Activated B cell treated with CpG ODN at 0.5 μM for 24 hours (primary cell): ENCODE measurements at regions of chr9 and their contacts with region 1.

Region 1: DNA sequence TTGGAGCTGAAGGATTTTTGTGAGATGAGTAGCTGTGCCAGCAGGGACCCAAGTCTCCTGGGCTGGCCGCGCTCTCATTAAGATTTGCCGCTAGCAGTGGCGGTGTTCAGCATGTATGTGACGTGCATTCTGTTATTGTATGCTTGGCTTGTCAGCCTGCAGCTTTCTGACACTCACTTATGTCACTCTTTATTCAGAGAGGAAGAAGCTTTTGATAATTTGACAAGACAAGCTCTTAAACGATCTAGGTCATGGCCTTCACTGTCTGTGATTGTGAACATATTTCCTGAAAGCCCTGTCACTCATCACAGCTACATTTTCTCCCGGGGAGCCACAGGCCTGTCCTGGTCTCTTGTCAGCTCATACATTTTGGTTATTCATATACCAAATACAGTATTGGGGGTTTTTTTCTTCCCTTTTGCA is 98.2 kb upstream of the GRHPR start:
- DNase-seq: peak; percentile 42
- ATAC-seq: peak; percentile 86
- H3K4me3 Mint-ChIP-seq: peak overlapping the region; percentile 59
- H3K27ac Mint-ChIP-seq: peak overlapping the region; percentile 99
- H3K4me1 Mint-ChIP-seq: peaks cover 69% of the 10 kb centered on the region
- H3K27me3 Mint-ChIP-seq: no peaks in the 10 kb centered on the region
- CTCF ChIP-seq: no peak

Region 2: DNA sequence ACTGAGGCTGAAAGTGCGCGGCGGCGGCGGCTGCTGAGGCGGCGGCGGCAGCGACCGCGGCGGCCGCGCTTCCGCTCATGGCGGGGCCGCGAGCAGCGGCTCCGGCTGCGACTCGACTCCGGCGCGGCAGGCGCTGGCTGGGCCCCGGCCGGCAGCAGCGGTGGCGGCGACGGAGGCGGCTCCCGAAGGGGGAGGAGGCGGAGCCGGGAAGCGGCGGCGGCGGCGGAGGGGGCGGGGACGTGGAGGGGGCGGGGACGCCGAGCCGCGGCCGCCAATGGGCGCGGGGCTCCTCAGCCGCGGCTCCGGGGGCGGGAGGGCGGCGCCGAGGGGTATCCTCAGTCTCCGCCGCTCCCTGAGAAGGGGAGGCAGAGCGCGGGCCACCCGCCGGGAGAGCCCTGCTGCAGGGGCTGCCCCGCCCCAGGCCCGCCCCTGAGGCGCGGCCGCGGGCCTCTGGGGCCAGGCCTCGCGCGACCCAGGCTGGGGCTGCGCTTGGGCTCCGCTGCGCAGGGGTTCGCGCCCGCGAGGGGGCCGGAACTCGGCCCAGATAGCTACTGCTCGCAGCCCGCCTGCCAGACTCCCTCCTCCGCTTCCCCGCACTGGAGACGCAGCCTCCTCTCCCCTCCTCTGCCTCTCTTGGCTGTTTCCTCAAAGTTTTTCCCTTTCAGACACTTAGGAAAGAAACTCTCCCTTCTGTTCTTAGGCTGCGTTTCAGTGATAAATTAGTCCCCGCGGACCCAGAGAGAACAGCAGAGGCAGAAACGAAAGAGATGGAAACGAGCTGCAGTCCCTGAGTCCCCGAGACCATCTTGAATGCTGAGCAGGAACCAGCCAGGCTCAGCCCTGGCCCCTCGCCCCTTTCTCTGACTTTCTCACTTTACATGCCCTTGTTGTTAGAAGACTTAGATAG is 836.5 kb before region 1 on chr9:
- CTCF ChIA-PET with region 1: no interaction called
- POLR2A ChIA-PET with region 1: no interaction called
- intact Hi-C with region 1: no loop called
- DNase-seq: peak; percentile 87
- ATAC-seq: peak; percentile 91
- H3K4me3 Mint-ChIP-seq: peak overlapping the region; percentile 97
- H3K27ac Mint-ChIP-seq: peak overlapping the region; percentile 100
- H3K4me1 Mint-ChIP-seq: peaks cover 44% of the 10 kb centered on the region
- H3K27me3 Mint-ChIP-seq: no peaks in the 10 kb centered on the region
- CTCF ChIP-seq: no peak

Region 3: GRCh38 chr9:37079370-37080164 is 244.7 kb before region 1 on chr9:
- CTCF ChIA-PET with region 1: no interaction called
- POLR2A ChIA-PET with region 1: interaction called, 4 read pairs
- intact Hi-C with region 1: loop called (anchors 5 kb)
- DNase-seq: peak; percentile 78
- ATAC-seq: peak; percentile 93
- H3K4me3 Mint-ChIP-seq: peak overlapping the region; percentile 94
- H3K27ac Mint-ChIP-seq: peak overlapping the region; percentile 95
- H3K4me1 Mint-ChIP-seq: peaks cover 78% of the 10 kb centered on the region
- H3K27me3 Mint-ChIP-seq: no peaks in the 10 kb centered on the region
- CTCF ChIP-seq: no peak

Region 4: GRCh38 chr9:37514999-37515398 is 190.7 kb after region 1 on chr9:
- CTCF ChIA-PET with region 1: no interaction called
- POLR2A ChIA-PET with region 1: no interaction called
- intact Hi-C with region 1: no loop called
- DNase-seq: no peak
- ATAC-seq: no peak
- H3K4me3 Mint-ChIP-seq: no peak overlapping the region
- H3K27ac Mint-ChIP-seq: no peak overlapping the region
- H3K4me1 Mint-ChIP-seq: peaks cover 8% of the 10 kb centered on the region
- H3K27me3 Mint-ChIP-seq: no peaks in the 10 kb centered on the region
- CTCF ChIP-seq: no peak

Region 5: DNA sequence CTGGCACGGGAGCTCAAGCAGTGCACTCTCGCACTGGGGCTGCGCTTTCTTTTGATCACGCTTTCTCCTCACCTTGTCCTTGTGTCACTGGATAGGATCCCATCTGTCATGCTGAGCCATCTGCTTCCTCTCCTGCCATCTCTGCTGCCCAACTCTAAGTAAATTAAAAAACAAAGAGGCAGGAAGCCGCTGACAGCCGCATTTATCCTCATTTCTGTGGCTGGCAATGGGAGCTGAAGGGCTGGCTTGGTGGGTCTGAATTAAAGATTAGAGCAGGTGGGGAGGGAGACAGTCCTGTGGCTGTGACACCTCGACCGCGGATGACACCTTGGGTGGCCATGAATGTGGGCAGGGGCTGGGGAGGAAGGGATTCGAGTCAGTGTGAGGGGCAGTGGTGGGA is 909.1 kb after region 1 on chr9:
- CTCF ChIA-PET with region 1: no interaction called
- POLR2A ChIA-PET with region 1: no interaction called
- intact Hi-C with region 1: no loop called
- DNase-seq: no peak
- ATAC-seq: no peak
- H3K4me3 Mint-ChIP-seq: no peak overlapping the region
- H3K27ac Mint-ChIP-seq: no peak overlapping the region
- H3K4me1 Mint-ChIP-seq: peaks cover 1% of the 10 kb centered on the region
- H3K27me3 Mint-ChIP-seq: peaks cover 30% of the 10 kb centered on the region
- CTCF ChIP-seq: no peak